ENCODE measurements at regions of chr2 and their contacts with region 1.

Region 1: GRCh38 chr2:3780477-3781402 is 77.4 kb downstream of the DCDC2C start:
- DNase-seq: peak; percentile 91
- H3K4me3 Mint-ChIP-seq: peak overlapping the region; percentile 66
- H3K27ac Mint-ChIP-seq: peak overlapping the region; percentile 15
- H3K4me1 Mint-ChIP-seq: peaks cover 6% of the 10 kb centered on the region
- H3K27me3 Mint-ChIP-seq: peaks cover 5% of the 10 kb centered on the region

Region 2: DNA sequence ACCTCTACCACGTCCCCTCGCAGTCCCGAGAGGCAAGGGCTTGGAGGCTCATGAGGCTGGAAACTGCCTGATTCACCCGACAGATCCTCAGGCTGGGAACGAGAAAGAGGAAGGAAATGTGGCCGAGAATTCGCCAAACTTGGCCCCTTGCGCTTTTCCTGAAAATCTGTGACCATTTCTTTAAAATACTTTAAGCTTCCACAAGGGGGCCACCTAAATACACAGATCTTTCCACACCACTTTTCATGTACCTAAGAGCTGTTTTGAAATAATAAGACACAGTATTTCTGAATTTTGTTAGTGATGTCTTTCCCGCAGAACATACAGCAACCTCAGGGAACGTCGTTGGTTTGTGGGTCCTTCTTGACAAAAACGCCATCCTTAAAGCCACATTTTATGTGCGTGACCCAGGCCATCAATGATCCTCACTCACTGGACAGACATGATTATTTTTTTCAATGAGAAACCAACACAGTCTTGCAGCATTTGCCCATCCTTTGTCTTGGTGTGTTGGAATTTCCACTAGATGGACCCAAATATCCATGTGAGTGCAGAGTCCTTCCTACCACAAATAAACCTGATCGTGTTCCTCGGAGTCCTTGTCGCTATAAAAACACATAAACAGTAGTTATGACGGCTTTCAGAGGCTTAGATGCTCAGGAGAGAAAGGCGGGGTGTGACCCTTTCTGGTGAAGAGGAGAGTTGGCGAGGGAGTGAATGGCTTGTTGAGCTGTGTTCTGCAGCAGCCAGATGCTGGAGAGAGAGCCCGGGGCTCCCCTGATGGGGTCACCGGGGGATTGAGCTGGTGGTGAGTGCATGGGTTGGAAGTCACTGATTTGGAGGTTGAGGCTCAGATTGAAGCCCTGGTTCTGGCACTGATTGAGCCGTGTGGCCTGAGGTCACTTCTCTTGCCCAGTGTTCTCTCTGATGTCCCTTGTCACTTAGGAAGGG is 52.4 kb before region 1 on chr2:
- intact Hi-C with region 1: loop called (anchors 1 kb)
- DNase-seq: no peak
- H3K4me3 Mint-ChIP-seq: no peak overlapping the region
- H3K27ac Mint-ChIP-seq: no peak overlapping the region
- H3K4me1 Mint-ChIP-seq: peaks cover 2% of the 10 kb centered on the region
- H3K27me3 Mint-ChIP-seq: no peaks in the 10 kb centered on the region